ENCODE measurements at regions of chr17 and their contacts with region 1.

Region 1: DNA sequence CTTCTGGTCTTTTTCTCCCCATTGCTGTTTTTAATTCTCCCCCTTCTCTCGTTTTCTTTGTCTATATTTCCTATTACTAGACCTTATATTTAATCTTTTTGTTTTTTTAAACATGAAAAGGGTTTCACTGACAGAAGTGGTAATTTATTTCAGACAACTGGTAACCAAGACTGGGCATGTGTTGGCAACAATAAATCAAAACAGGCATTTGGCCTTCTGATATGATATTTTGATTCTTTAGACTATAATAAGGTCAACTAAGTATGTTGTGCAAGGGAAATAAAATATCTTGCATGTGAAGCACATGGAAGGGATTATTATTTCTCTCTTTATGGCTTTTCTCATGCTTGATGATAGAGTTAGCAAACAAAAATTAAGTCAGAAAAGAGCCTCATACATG is 34.6 kb downstream of the AP2B1 start:
- DNase-seq: no peak
- H3K4me3 ChIP-seq: no peak overlapping the region
- H3K27ac ChIP-seq: no peak overlapping the region
- H3K4me1 ChIP-seq: no peaks in the 10 kb centered on the region
- H3K27me3 ChIP-seq: no peaks in the 10 kb centered on the region
- CTCF ChIP-seq: no peak

Region 2: DNA sequence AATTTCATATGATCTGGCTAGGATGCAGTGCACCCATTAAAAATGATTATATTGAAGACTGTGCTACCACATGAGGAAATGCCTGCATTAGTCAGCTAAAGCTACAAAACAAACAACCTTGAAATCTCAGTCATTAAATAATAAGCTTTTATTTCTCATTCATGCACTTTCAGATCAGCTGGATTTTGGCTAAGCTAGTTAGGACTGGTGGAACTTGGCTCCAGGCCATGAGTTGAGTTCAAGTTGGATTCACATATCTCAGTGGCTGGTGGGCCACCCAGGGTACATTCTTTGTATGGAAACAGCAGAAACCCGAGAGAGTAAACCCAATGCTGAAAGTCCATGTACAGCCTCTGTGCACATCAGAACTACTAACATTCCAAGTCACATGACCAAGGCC is 77.9 kb before region 1 on chr17:
- CTCF ChIA-PET with region 1: no interaction called
- POLR2A ChIA-PET with region 1: no interaction called
- intact Hi-C with region 1: no loop called
- DNase-seq: no peak
- H3K4me3 ChIP-seq: no peak overlapping the region
- H3K27ac ChIP-seq: no peak overlapping the region
- H3K4me1 ChIP-seq: no peaks in the 10 kb centered on the region
- H3K27me3 ChIP-seq: peaks cover 23% of the 10 kb centered on the region
- CTCF ChIP-seq: no peak

Region 3: DNA sequence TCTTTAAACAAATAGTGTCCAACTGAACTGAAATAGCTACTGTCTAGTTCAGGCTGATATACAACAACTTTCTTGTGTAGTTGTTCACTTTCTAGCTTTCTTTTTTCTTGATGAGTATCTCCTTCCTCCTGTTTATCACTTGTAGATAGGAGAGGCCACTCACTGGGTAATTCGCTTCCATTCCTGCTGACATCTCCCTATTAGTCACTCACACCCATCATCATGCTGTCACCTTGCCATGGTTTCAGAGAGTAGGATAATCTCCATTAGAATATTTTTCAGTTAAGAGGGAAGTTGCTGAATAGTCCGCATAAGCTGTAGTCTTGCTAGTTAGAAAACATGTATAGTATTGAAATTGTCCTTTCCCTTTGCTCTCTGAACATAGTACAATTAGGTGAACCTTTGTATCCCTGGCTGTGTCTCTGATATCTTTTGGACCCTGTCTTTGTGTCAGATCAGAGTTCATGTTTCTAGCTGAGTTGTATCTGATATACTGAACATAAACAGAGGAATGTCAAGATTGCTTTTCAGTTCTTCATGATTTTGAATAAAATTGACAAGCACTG is 45.3 kb after region 1 on chr17:
- CTCF ChIA-PET with region 1: no interaction called
- POLR2A ChIA-PET with region 1: no interaction called
- intact Hi-C with region 1: loop called (anchors 5 kb)
- DNase-seq: no peak
- H3K4me3 ChIP-seq: no peak overlapping the region
- H3K27ac ChIP-seq: no peak overlapping the region
- H3K4me1 ChIP-seq: no peaks in the 10 kb centered on the region
- H3K27me3 ChIP-seq: no peaks in the 10 kb centered on the region
- CTCF ChIP-seq: no peak